Endothelial cell of umbilical vein (primary cell): ENCODE measurements at regions of chr1 and their contacts with region 1.

Region 1: GRCh38 chr1:248807067-248807737 is 18.5 kb downstream of the SH3BP5L start:
- DNase-seq: peak; percentile 26
- H3K4me3 ChIP-seq: no peak overlapping the region
- H3K27ac ChIP-seq: no peak overlapping the region
- H3K4me1 ChIP-seq: peaks cover 2% of the 10 kb centered on the region
- H3K27me3 ChIP-seq: no peaks in the 10 kb centered on the region
- CTCF ChIP-seq: peak; percentile 71 to 82
- POLR2A ChIP-seq: no peak

Region 2: GRCh38 chr1:247390116-247390791 is 1416.9 kb before region 1 on chr1:
- CTCF ChIA-PET with region 1: interaction called, 4 read pairs
- POLR2A ChIA-PET with region 1: no interaction called
- dilution Hi-C with region 1: no loop called
- intact Hi-C with region 1: loop called (anchors 5 kb)
- DNase-seq: peak; percentile 71
- H3K4me3 ChIP-seq: no peak overlapping the region
- H3K27ac ChIP-seq: no peak overlapping the region
- H3K4me1 ChIP-seq: no peaks in the 10 kb centered on the region
- H3K27me3 ChIP-seq: no peaks in the 10 kb centered on the region
- CTCF ChIP-seq: peak; percentile 73 to 84
- POLR2A ChIP-seq: no peak

Region 3: GRCh38 chr1:247681288-247681897 is 1125.8 kb before region 1 on chr1:
- CTCF ChIA-PET with region 1: no interaction called
- POLR2A ChIA-PET with region 1: no interaction called
- dilution Hi-C with region 1: no loop called
- intact Hi-C with region 1: loop called (anchors 5 kb)
- DNase-seq: peak; percentile 8
- H3K4me3 ChIP-seq: no peak overlapping the region
- H3K27ac ChIP-seq: no peak overlapping the region
- H3K4me1 ChIP-seq: no peaks in the 10 kb centered on the region
- H3K27me3 ChIP-seq: no peaks in the 10 kb centered on the region
- CTCF ChIP-seq: peak; percentile 60
- POLR2A ChIP-seq: no peak

Region 4: DNA sequence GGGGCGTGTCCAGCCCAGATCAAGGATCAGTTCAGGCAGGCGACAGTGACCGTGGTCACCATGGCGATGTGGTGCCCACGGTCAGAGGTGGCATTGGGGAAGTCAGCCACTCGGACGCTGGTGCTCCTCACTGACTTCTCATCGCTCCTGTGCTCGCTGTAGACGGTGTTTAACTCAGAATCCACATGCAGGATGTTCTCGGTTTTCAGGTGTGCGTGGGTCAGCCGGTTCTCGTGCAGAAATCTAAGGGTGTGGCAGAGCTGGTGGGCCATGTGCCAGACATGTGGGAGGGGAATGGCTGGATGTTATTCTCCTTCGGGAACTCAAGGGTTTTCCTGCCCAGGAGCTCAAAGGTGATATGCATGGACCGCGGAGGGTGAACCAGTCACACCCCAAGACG is 870.8 kb before region 1 on chr1:
- CTCF ChIA-PET with region 1: no interaction called
- POLR2A ChIA-PET with region 1: no interaction called
- dilution Hi-C with region 1: no loop called
- intact Hi-C with region 1: loop called (anchors 1 kb)
- DNase-seq: no peak
- H3K4me3 ChIP-seq: no peak overlapping the region
- H3K27ac ChIP-seq: no peak overlapping the region
- H3K4me1 ChIP-seq: no peaks in the 10 kb centered on the region
- H3K27me3 ChIP-seq: no peaks in the 10 kb centered on the region
- CTCF ChIP-seq: no peak
- POLR2A ChIP-seq: no peak

Region 5: GRCh38 chr1:248243204-248243603 is 564.0 kb before region 1 on chr1:
- CTCF ChIA-PET with region 1: no interaction called
- POLR2A ChIA-PET with region 1: no interaction called
- dilution Hi-C with region 1: no loop called
- intact Hi-C with region 1: loop called (anchors 5 kb)
- DNase-seq: no peak
- H3K4me3 ChIP-seq: no peak overlapping the region
- H3K27ac ChIP-seq: no peak overlapping the region
- H3K4me1 ChIP-seq: no peaks in the 10 kb centered on the region
- H3K27me3 ChIP-seq: no peaks in the 10 kb centered on the region
- CTCF ChIP-seq: peak; percentile 32 to 38
- POLR2A ChIP-seq: no peak

Region 6: GRCh38 chr1:248622570-248623001 is 184.6 kb before region 1 on chr1:
- CTCF ChIA-PET with region 1: interaction called, 11 read pairs
- POLR2A ChIA-PET with region 1: no interaction called
- dilution Hi-C with region 1: no loop called
- intact Hi-C with region 1: loop called (anchors 2 kb)
- DNase-seq: peak; percentile 13
- H3K4me3 ChIP-seq: no peak overlapping the region
- H3K27ac ChIP-seq: no peak overlapping the region
- H3K4me1 ChIP-seq: no peaks in the 10 kb centered on the region
- H3K27me3 ChIP-seq: no peaks in the 10 kb centered on the region
- CTCF ChIP-seq: peak; percentile 7 to 25
- POLR2A ChIP-seq: no peak